ENCODE measurements at regions of chr10 and their contacts with region 1.

Region 1: GRCh38 chr10:12348870-12349628 is at the start of gene CAMK1D:
- DNase-seq: peak; percentile 84 to 96 (median 90)
- ATAC-seq: peak; percentile 60
- H3K4me3 ChIP-seq: peak within 1 kb of the TSS; percentile 95
- H3K4me3 Mint-ChIP-seq: peak within 1 kb of the TSS; percentile 97
- H3K27ac ChIP-seq: peak within 1 kb of the TSS; percentile 38 to 84
- H3K27ac Mint-ChIP-seq: peak within 1 kb of the TSS; percentile 93
- H3K4me1 ChIP-seq: peaks cover 28% of the 10 kb centered on the region
- H3K4me1 Mint-ChIP-seq: peaks cover 46% of the 10 kb centered on the region
- H3K27me3 ChIP-seq: no peaks in the 10 kb centered on the region
- H3K27me3 Mint-ChIP-seq: no peaks in the 10 kb centered on the region
- CTCF ChIP-seq: peak; percentile 20
- total RNA-seq, gene CAMK1D: 28.8 to 35.3 TPM

Region 2: GRCh38 chr10:12042797-12043651 is 306.0 kb before region 1 on chr10 and contains the start of gene UPF2:
- CTCF ChIA-PET with region 1: no interaction called
- POLR2A ChIA-PET with region 1: interaction called, 6 read pairs
- intact Hi-C with region 1: loop called in 1 of 2 experiments (anchors 10 kb)
- DNase-seq: peak; percentile 94 to 99 (median 96)
- ATAC-seq: peak; percentile 87
- H3K4me3 ChIP-seq: peak within 1 kb of the TSS; percentile 99
- H3K4me3 Mint-ChIP-seq: peak within 1 kb of the TSS; percentile 98
- H3K27ac ChIP-seq: peak within 1 kb of the TSS; percentile 98 to 100
- H3K27ac Mint-ChIP-seq: peak within 1 kb of the TSS; percentile 100
- H3K4me1 ChIP-seq: peaks cover 17% of the 10 kb centered on the region
- H3K4me1 Mint-ChIP-seq: peaks cover 33% of the 10 kb centered on the region
- H3K27me3 ChIP-seq: no peaks in the 10 kb centered on the region
- H3K27me3 Mint-ChIP-seq: no peaks in the 10 kb centered on the region
- CTCF ChIP-seq: no peak
- total RNA-seq, gene UPF2: 14.5 to 15.3 TPM

Region 3: DNA sequence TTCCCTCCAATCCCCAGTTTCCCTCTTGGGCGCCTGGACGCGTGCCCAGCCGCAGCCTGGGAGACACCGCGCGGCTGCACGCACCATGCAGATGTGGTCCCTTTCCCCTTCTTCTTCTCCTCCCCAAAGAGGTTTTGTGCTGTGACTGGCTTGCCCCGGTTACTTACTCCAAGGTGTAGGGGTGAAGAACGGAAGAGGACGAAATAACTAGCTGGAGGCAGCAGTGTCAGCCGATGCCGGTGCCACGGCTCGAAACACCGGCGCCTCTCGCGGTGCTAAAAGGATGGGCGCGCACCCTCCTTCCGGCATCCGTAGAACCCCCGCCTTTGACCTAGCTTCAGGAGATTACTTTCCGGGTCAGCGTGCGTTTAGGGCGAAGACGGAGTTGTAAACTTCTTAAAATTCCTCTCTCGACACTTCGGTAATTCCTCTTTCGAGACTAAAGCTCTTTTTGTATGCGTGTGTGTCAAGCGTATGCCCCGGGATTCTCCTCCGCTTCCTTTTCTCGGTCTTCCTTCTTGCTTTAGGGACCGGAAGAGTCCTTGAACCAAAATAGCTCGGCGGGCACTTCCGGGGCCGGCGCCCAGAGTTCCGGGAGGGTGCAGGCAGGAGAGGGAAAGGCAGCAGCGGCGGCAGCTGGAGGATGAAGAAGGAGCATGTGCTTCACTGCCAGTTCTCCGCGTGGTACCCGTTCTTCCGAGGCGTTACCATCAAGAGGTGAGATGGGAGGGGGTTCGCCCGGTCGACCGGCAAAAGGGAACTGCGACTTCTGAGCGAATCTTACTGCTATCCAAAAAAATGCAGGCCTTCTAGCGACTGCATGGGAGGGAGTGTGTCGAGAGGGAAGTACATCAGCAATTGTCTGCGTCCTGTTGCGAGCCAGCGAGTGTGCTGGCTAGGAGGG is 153.2 kb before region 1 on chr10 and contains the starts of genes CDC123 and NUDT5:
- CTCF ChIA-PET with region 1: no interaction called
- POLR2A ChIA-PET with region 1: interaction called, 15 read pairs
- intact Hi-C with region 1: loop called in 1 of 2 experiments (anchors 5 kb)
- DNase-seq: peak; percentile 73 to 93 (median 79)
- ATAC-seq: peak; percentile 91
- H3K4me3 ChIP-seq: peak within 1 kb of the TSS; percentile 88
- H3K4me3 Mint-ChIP-seq: peak within 1 kb of the TSS; percentile 97
- H3K27ac ChIP-seq: peak within 1 kb of the TSS; percentile 94 to 96
- H3K27ac Mint-ChIP-seq: peak within 1 kb of the TSS; percentile 96
- H3K4me1 ChIP-seq: peaks cover 27% of the 10 kb centered on the region
- H3K4me1 Mint-ChIP-seq: peaks cover 70% of the 10 kb centered on the region
- H3K27me3 ChIP-seq: no peaks in the 10 kb centered on the region
- H3K27me3 Mint-ChIP-seq: no peaks in the 10 kb centered on the region
- CTCF ChIP-seq: no peak
- total RNA-seq, gene CDC123: 34.7 to 40.5 TPM
- total RNA-seq, gene NUDT5: 11.6 to 13.5 TPM

Region 4: GRCh38 chr10:12364559-12364958 is 15.5 kb after region 1 on chr10:
- CTCF ChIA-PET with region 1: no interaction called
- POLR2A ChIA-PET with region 1: interaction called, 32 read pairs
- intact Hi-C with region 1: no loop called
- DNase-seq: no peak
- ATAC-seq: no peak
- H3K4me3 ChIP-seq: no peak overlapping the region
- H3K4me3 Mint-ChIP-seq: no peak overlapping the region
- H3K27ac ChIP-seq: no peak overlapping the region
- H3K27ac Mint-ChIP-seq: no peak overlapping the region
- H3K4me1 ChIP-seq: peaks cover 25% of the 10 kb centered on the region
- H3K4me1 Mint-ChIP-seq: peaks cover 52% of the 10 kb centered on the region
- H3K27me3 ChIP-seq: no peaks in the 10 kb centered on the region
- H3K27me3 Mint-ChIP-seq: no peaks in the 10 kb centered on the region
- CTCF ChIP-seq: no peak

Region 5: GRCh38 chr10:12484941-12485805 is 136.1 kb after region 1 on chr10:
- CTCF ChIA-PET with region 1: no interaction called
- POLR2A ChIA-PET with region 1: interaction called, 13 read pairs
- intact Hi-C with region 1: no loop called
- DNase-seq: peak; percentile 9 to 62 (median 24)
- ATAC-seq: peak; percentile 79
- H3K4me3 ChIP-seq: no peak overlapping the region
- H3K4me3 Mint-ChIP-seq: peak overlapping the region; percentile 55
- H3K27ac ChIP-seq: no peak overlapping the region
- H3K27ac Mint-ChIP-seq: peak overlapping the region; percentile 75
- H3K4me1 ChIP-seq: peaks cover 15% of the 10 kb centered on the region
- H3K4me1 Mint-ChIP-seq: peaks cover 58% of the 10 kb centered on the region
- H3K27me3 ChIP-seq: no peaks in the 10 kb centered on the region
- H3K27me3 Mint-ChIP-seq: no peaks in the 10 kb centered on the region
- CTCF ChIP-seq: no peak

Region 6: GRCh38 chr10:12656518-12657142 is 307.6 kb after region 1 on chr10:
- CTCF ChIA-PET with region 1: interaction called, 8 read pairs
- POLR2A ChIA-PET with region 1: interaction called, 19 read pairs
- intact Hi-C with region 1: loop called (anchors 5 to 10 kb)
- DNase-seq: peak in 4 of 14 experiments; percentile 10 to 71 (median 70)
- ATAC-seq: peak; percentile 86
- H3K4me3 ChIP-seq: no peak overlapping the region
- H3K4me3 Mint-ChIP-seq: peak overlapping the region; percentile 23
- H3K27ac ChIP-seq: no peak overlapping the region
- H3K27ac Mint-ChIP-seq: no peak overlapping the region
- H3K4me1 ChIP-seq: peaks cover 4% of the 10 kb centered on the region
- H3K4me1 Mint-ChIP-seq: peaks cover 8% of the 10 kb centered on the region
- H3K27me3 ChIP-seq: no peaks in the 10 kb centered on the region
- H3K27me3 Mint-ChIP-seq: no peaks in the 10 kb centered on the region
- CTCF ChIP-seq: peak; percentile 75

Measured in CD4-positive, alpha-beta T cell (primary cell).